ENCODE measurements at regions of chr1 and their contacts with region 1.

Region 1: GRCh38 chr1:2044510-2045319 is 5.5 kb upstream of the PRKCZ start:
- DNase-seq: peak; percentile 31
- H3K4me3 ChIP-seq: peak overlapping the region in 2 of 3 experiments; percentile 21 to 35
- H3K27ac ChIP-seq: no peak overlapping the region
- H3K4me1 ChIP-seq: peaks cover 17% of the 10 kb centered on the region
- H3K27me3 ChIP-seq: no peaks in the 10 kb centered on the region
- CTCF ChIP-seq: peak; percentile 64 to 68

Region 2: GRCh38 chr1:1591452-1591851 is 453.3 kb before region 1 on chr1:
- CTCF ChIA-PET with region 1: no interaction called
- dilution Hi-C with region 1: no loop called
- in situ Hi-C with region 1: no loop called
- intact Hi-C with region 1: no loop called
- DNase-seq: no peak
- H3K4me3 ChIP-seq: no peak overlapping the region
- H3K27ac ChIP-seq: no peak overlapping the region
- H3K4me1 ChIP-seq: no peaks in the 10 kb centered on the region
- H3K27me3 ChIP-seq: no peaks in the 10 kb centered on the region
- CTCF ChIP-seq: no peak

Region 3: GRCh38 chr1:1763657-1764616 is 280.8 kb before region 1 on chr1:
- CTCF ChIA-PET with region 1: no interaction called
- dilution Hi-C with region 1: no loop called
- in situ Hi-C with region 1: no loop called
- intact Hi-C with region 1: loop called (anchors 10 kb)
- DNase-seq: peak; percentile 94
- H3K4me3 ChIP-seq: no peak overlapping the region
- H3K27ac ChIP-seq: no peak overlapping the region
- H3K4me1 ChIP-seq: peaks cover 19% of the 10 kb centered on the region
- H3K27me3 ChIP-seq: no peaks in the 10 kb centered on the region
- CTCF ChIP-seq: peak in 1 of 2 donors; percentile 45

Region 4: GRCh38 chr1:1943834-1944570 is 100.7 kb before region 1 on chr1:
- CTCF ChIA-PET with region 1: interaction called, 3 read pairs
- dilution Hi-C with region 1: loop called (anchors 5 kb)
- in situ Hi-C with region 1: no loop called
- intact Hi-C with region 1: loop called (anchors 1 kb)
- DNase-seq: peak; percentile 17
- H3K4me3 ChIP-seq: no peak overlapping the region
- H3K27ac ChIP-seq: no peak overlapping the region
- H3K4me1 ChIP-seq: peaks cover 8% of the 10 kb centered on the region
- H3K27me3 ChIP-seq: no peaks in the 10 kb centered on the region
- CTCF ChIP-seq: peak; percentile 67 to 78

Region 5: DNA sequence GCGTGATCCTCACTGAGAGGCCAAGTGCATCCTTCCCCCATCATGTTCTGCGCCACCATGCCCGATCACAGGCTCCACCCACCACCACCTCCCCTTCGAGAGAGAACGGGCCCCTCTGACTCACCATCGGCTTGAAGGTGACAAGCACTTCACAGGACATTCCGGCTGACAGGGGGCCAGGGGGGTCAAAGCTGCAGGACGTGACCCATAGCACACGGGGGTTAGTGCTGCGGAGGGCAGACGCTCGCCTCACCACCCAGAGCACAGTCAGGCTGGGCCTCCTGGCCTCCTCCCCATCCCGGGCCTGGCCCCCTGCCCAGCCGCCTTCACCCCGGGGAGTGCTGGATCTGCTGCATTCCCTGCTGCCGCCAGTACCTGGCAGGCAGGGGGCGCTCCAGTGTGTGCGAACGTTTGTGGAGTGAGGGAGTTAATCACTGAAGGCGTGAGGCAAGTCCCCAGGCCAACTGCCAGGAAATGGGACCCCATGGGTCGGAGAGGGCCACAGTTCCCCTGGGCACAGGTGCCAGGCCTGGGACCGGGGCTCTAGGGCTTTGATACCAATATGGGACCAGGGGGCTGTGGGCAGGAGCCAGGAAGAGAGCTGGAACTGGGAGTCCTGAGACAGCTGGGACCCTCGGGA is 84.8 kb before region 1 on chr1:
- CTCF ChIA-PET with region 1: interaction called, 10 read pairs
- dilution Hi-C with region 1: no loop called
- in situ Hi-C with region 1: loop called (anchors 5 kb)
- intact Hi-C with region 1: loop called (anchors 1 kb)
- DNase-seq: peak; percentile 69
- H3K4me3 ChIP-seq: no peak overlapping the region
- H3K27ac ChIP-seq: no peak overlapping the region
- H3K4me1 ChIP-seq: peaks cover 6% of the 10 kb centered on the region
- H3K27me3 ChIP-seq: peaks cover 7% of the 10 kb centered on the region
- CTCF ChIP-seq: peak; percentile 85 to 95

Region 6: GRCh38 chr1:2091611-2092604 is 47.2 kb after region 1 on chr1:
- CTCF ChIA-PET with region 1: no interaction called
- dilution Hi-C with region 1: no loop called
- in situ Hi-C with region 1: no loop called
- intact Hi-C with region 1: no loop called
- DNase-seq: no peak
- H3K4me3 ChIP-seq: no peak overlapping the region
- H3K27ac ChIP-seq: no peak overlapping the region
- H3K4me1 ChIP-seq: no peaks in the 10 kb centered on the region
- H3K27me3 ChIP-seq: no peaks in the 10 kb centered on the region
- CTCF ChIP-seq: no peak

Region 7: DNA sequence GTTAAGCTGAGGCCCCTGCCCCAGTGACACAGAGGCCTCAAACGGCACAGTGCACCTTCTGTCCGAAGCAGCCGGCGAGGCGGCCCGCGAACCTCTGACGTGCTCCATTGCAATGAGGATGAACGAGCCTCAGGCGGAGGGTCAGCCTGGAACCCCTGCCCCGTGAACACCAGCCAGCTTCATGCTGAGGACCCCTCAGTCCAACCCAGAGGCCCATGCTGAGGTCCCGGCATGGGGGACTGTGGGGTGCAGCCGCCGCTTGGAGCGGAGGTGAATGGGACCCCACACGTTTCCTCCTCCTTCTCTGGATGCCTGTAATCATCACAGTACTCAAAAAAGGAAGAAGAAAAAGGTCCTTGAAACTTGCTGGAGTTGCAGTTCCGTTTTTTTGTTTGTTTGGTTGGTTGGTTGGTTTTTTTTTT is 67.6 kb after region 1 on chr1:
- CTCF ChIA-PET with region 1: no interaction called
- dilution Hi-C with region 1: loop called (anchors 5 kb)
- in situ Hi-C with region 1: no loop called
- intact Hi-C with region 1: no loop called
- DNase-seq: no peak
- H3K4me3 ChIP-seq: no peak overlapping the region
- H3K27ac ChIP-seq: no peak overlapping the region
- H3K4me1 ChIP-seq: no peaks in the 10 kb centered on the region
- H3K27me3 ChIP-seq: no peaks in the 10 kb centered on the region
- CTCF ChIP-seq: no peak

Measured in mammary epithelial cell (primary cell).